Right ventricle myocardium superior (tissue), 1 donor: ENCODE measurements at regions of chr5 and their contacts with region 1.

Region 1: GRCh38 chr5:14644623-14645237 is 19.8 kb upstream of the OTULIN start:
- DNase-seq: no peak
- ATAC-seq: no peak

Region 2: GRCh38 chr5:13987843-13988464 is 656.8 kb before region 1 on chr5:
- intact Hi-C with region 1: loop called (anchors 5 kb)
- DNase-seq: no peak
- ATAC-seq: peak; percentile 76

Region 3: DNA sequence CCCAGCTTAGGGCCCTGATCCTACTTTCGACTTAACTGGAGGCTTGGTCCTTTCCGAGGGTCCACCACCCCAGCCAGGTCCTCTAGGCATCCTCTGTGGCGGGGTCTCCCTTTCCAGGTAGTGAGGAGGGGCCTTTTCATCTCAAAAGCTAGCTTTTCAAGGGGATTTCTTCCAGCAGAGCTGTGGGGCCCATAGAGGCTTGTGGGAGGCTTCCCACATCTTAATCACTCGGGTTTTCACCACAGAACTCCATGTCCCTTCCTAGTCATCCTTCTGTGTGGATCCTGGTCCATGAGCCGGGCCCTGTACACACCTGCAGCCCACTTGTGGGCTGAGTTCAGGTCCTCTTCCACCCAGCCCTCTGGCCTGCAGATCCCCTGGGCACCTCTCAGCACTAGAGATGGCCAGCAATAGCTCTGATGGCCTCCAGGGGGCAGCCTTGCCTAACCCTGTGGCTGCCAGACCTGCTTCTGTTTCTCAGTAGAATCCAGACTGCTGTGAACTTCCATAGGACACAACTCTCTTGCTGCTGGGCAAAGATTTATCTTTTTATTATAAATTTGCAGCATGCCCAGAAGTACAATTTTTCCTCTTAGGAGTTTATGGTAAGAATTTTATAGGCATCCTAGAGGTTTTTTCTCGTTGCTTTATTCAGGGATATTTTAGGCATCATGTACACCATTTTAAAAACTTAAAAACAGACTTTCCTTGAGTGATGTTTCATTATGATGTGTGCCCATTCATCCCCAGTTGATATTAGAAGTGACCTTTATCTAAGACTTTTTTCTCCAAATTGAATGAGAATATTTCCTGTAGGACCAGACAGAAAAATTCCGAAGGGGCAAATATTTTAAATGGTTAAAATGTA is 292.7 kb before region 1 on chr5:
- intact Hi-C with region 1: loop called (anchors 10 kb)
- DNase-seq: peak; percentile 81
- ATAC-seq: peak; percentile 95